OCI-LY7 (cell line): ENCODE measurements at regions of chr2 and their contacts with region 1.

Region 1: GRCh38 chr2:233174137-233174536 is 77.3 kb upstream of the ATG16L1 start:
- DNase-seq: no peak
- H3K4me3 ChIP-seq: no peak overlapping the region
- H3K27ac ChIP-seq: no peak overlapping the region
- H3K4me1 ChIP-seq: no peaks in the 10 kb centered on the region
- CTCF ChIP-seq: no peak

Region 2: DNA sequence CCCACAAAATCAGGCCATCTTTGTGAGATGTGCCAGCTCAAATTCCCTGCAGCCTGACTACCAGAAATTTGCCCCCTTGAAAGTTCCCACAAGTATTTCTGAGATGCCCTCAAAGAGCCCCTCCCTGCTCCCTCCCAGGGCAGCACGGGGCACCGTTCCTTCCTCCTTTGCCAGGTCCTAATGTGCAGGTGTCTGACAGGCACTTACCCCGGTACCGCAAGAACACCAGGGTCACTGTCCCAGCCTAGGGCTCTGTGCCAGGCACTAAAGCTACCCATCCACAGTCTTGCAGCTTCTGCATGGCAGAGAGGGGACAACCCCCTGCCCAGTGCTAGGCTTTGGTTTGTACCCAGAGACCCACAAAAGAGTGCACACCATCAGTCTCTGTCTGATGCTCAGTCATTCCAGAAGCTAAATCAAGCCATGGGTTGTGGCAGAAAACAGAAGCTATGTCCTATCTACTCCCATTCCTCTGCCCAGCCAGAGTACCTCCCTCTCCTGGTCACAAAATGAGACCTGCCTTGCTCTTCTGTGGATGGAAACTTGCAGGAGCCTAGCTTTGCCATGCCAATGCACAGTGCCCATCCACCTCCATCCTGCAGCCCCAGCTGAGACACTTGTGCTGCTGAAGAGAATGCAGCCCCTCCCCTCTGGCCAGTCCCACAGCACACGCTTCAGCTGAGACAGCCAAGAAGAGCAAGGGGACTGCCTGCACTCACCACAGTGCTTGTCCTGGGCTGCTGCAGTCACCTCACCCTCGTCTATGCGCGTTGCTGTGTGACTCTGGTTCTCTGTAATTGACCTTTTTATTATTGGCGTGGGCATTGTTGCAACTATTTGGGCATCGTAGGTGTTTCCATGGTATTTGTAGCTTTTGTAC is 65.3 kb before region 1 on chr2:
- CTCF ChIA-PET with region 1: no interaction called
- POLR2A ChIA-PET with region 1: no interaction called
- intact Hi-C with region 1: no loop called
- DNase-seq: no peak
- H3K4me3 ChIP-seq: no peak overlapping the region
- H3K27ac ChIP-seq: no peak overlapping the region
- H3K4me1 ChIP-seq: peaks cover 28% of the 10 kb centered on the region
- CTCF ChIP-seq: no peak

Region 3: DNA sequence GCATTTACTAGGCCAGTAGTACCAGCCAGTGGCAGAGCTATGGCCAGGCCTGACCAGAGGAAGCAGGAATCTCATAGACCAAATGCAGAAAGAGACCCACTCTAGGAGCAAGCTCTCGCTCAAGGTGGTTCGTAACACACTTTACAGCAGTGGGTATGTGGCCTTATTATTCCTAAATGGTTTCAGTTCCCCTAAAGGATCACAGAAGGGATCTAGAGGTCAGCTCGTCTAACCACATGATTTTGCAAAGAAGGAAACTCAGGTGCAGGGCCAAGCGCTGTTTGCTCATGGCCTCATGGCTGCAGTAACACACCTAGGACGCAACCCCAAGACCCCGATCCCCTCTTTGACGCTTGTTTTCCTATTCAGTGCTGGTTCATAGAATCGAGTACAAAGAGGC is 11.8 kb after region 1 on chr2:
- CTCF ChIA-PET with region 1: no interaction called
- POLR2A ChIA-PET with region 1: interaction called, 10 read pairs
- intact Hi-C with region 1: no loop called
- DNase-seq: peak; percentile 78
- H3K4me3 ChIP-seq: peak overlapping the region; percentile 37
- H3K27ac ChIP-seq: peak overlapping the region; percentile 78
- H3K4me1 ChIP-seq: peaks cover 25% of the 10 kb centered on the region
- CTCF ChIP-seq: no peak